ENCODE measurements at regions of chr9 and their contacts with region 1.

Region 1: DNA sequence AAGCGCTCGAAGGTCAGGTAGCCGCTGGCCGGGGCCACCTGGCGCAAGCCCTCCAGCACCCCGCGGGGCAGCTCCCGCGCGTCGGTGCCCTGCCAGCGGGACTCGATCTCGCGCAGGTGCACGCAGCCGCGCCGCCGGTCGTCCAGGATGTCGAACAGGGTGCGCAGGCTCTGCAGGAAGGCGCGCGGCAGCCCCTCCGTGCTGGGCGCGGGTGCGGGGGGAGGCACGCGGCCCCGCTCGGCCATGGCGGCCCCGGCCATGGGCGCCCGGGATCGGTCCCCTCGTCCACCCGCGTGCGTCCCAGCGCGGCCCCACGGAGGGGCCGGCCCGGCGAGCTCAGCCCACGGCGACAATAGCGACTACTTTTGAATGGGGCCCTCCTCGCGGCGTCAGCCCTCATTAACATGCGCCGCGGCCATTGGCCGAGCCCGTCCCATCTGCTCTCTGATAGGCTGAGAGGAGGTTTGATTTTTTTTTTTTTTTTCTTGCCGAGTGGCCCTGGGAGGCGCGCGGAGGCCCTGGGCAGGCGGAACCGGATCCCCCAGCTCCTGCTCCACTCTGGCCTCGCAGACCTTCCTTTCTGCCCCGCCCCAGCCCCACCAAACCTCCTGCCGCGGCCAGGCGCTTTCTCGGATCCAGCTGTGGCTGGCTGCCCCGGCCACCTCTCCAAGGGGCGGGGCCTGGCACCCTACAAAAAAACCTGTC is at the start of gene SAPCD2:
- DNase-seq: peak; percentile 79
- ATAC-seq: peak; percentile 94
- H3K4me3 ChIP-seq: peak within 1 kb of the TSS; percentile 53
- H3K27ac ChIP-seq: no peak within 1 kb of the TSS; the same call in 1 of the 2 replicates
- H3K4me1 ChIP-seq: peaks cover 3% of the 10 kb centered on the region; the same call in 1 of the 2 replicates
- H3K27me3 ChIP-seq: no peaks in the 10 kb centered on the region; the same call in 1 of the 2 replicates
- CTCF ChIP-seq: no peak
- POLR2A ChIP-seq: no peak
- RAD21 ChIP-seq: no peak
- total RNA-seq, gene SAPCD2: 3.3 and 3.4 TPM in 2 replicates

Region 2: DNA sequence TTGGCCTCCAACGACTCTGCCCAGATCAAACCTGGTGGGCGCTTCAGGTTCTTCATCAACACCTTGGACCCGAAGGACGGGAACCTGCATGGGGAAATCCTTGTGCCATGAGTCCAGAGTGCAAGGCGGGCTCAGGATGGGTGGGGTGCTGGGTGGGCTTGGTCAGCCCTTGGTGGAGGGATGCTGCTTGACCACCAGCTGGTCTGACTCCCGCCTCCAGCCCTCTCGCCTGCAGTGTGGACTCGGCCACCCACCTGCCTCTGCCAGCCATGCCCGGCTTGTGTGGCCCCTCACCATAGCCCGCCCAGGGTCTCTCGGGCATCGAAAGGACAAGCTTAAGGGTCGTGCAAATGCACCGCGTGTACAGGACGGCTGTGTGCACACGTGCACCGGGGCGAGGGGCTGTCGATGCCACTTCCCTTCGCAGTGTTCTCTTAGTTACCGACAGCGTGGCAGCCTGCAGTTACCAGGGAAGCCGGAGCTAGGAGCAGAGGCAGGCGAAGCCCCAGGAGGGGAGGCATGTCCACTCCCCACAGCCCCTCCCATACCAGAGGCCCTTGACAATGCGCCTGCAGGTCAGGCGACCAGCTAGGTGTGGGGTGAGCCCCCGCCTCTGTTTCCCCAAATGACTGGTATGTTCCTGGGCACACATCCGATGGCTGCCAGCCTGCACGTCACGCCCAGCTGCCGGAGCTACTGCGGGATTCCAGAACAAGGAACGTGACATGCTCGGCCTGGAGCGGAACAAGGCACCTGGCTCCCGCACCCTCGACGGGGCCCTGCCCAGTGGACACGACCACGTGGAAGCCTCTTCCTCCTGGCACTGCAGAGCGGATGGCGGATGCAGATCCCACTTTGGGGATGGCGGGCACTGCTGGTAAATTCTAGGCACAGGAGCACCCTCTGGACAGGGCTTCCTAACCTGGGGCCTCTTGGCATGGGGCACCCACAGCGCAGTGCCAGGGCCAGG is 1399.4 kb before region 1 on chr9:
- CTCF ChIA-PET with region 1: no interaction called
- POLR2A ChIA-PET with region 1: interaction called, 11 read pairs
- dilution Hi-C with region 1: no loop called
- in situ Hi-C with region 1: no loop called
- intact Hi-C with region 1: no loop called
- DNase-seq: no peak
- ATAC-seq: no peak
- H3K4me3 ChIP-seq: no peak overlapping the region
- H3K27ac ChIP-seq: no peak overlapping the region
- H3K4me1 ChIP-seq: no peaks in the 10 kb centered on the region
- H3K27me3 ChIP-seq: no peaks in the 10 kb centered on the region; the same call in 1 of the 2 replicates
- CTCF ChIP-seq: no peak
- POLR2A ChIP-seq: no peak
- RAD21 ChIP-seq: no peak

Region 3: GRCh38 chr9:137086531-137087408 is 16.4 kb after region 1 on chr9 and contains the start of gene MAN1B1:
- CTCF ChIA-PET with region 1: interaction called, 4 read pairs
- POLR2A ChIA-PET with region 1: no interaction called
- dilution Hi-C with region 1: no loop called
- in situ Hi-C with region 1: no loop called
- intact Hi-C with region 1: loop called (anchors 1 kb)
- DNase-seq: peak; percentile 98
- ATAC-seq: peak; percentile 83
- H3K4me3 ChIP-seq: peak within 1 kb of the TSS; percentile 61
- H3K27ac ChIP-seq: peak within 1 kb of the TSS; percentile 62
- H3K4me1 ChIP-seq: peaks cover 15% of the 10 kb centered on the region
- H3K27me3 ChIP-seq: no peaks in the 10 kb centered on the region
- CTCF ChIP-seq: no peak
- POLR2A ChIP-seq: peak; percentile 58
- RAD21 ChIP-seq: 0 out of 2 replicates have a peak, but pooled peaks have one; percentile 6
- total RNA-seq, gene MAN1B1: 25.0 and 28.7 TPM in 2 replicates

Region 4: DNA sequence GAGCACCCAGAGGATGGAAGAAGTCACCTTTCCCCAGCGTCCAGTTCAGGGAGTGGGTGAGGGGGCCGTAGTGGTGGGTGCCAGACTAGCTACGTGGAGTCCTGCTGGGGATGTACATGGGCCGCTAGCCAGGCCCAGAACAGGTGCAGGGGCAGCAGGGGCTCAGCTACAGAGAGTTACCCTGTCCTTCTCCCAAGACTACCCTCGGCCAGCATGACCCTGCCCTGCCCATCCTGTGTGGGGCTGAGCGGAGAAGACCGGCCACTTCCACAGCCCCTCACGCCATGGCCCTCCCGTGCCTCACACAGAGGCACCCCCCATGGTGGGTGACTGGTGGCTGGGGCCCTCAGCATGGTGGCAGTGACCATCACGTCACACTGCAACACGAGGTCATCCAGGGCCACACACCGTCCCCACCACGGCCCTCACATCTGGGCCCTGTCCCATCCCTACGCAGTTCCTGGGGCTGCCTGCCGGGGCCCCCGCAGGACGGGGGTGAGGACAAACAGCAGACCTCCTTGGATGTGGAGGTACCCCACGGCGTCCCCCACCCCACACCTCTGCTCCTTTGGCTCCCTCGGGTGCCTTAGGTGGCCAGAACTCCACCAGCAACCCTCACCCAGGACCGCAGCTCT is 45.2 kb after region 1 on chr9:
- CTCF ChIA-PET with region 1: no interaction called
- POLR2A ChIA-PET with region 1: no interaction called
- dilution Hi-C with region 1: no loop called
- in situ Hi-C with region 1: no loop called
- intact Hi-C with region 1: no loop called
- DNase-seq: no peak
- ATAC-seq: no peak
- H3K4me3 ChIP-seq: no peak overlapping the region
- H3K27ac ChIP-seq: no peak overlapping the region
- H3K4me1 ChIP-seq: peaks cover 6% of the 10 kb centered on the region
- H3K27me3 ChIP-seq: no peaks in the 10 kb centered on the region
- CTCF ChIP-seq: no peak
- POLR2A ChIP-seq: no peak
- RAD21 ChIP-seq: no peak